Ovary (tissue), 10 donors: ENCODE measurements at regions of chr14 and their contacts with region 1.

Region 1: GRCh38 chr14:21039585-21040369 is 2.4 kb upstream of the RNASE7 start:
- DNase-seq: peak; percentile 59 to 70 (median 62)
- H3K4me3 ChIP-seq: no peak overlapping the region
- H3K27ac ChIP-seq: peak overlapping the region; percentile 27 to 55
- H3K4me1 ChIP-seq: peaks cover 13% of the 10 kb centered on the region
- H3K27me3 ChIP-seq: no peaks in the 10 kb centered on the region
- CTCF ChIP-seq: peak; percentile 38 to 83 (median 76)
- EP300 ChIP-seq: no peak
- POLR2A ChIP-seq: no peak

Region 2: GRCh38 chr14:20989572-20990551 is 49.9 kb before region 1 on chr14 and contains the start of gene METTL17:
- intact Hi-C with region 1: loop called in 1 of 4 experiments (anchors 10 kb)
- DNase-seq: peak; percentile 88 to 93 (median 90)
- H3K4me3 ChIP-seq: peak within 1 kb of the TSS; percentile 91
- H3K27ac ChIP-seq: peak within 1 kb of the TSS; percentile 23 to 67
- H3K4me1 ChIP-seq: peaks cover 8% of the 10 kb centered on the region
- H3K27me3 ChIP-seq: no peaks in the 10 kb centered on the region
- CTCF ChIP-seq: peak in 1 of 3 donors; percentile 25
- EP300 ChIP-seq: no peak
- POLR2A ChIP-seq: peak; percentile 54
- total RNA-seq, gene METTL17: 42.5 to 65.1 (median 45.7) TPM

Region 3: GRCh38 chr14:21014761-21015190 is 25.0 kb before region 1 on chr14:
- intact Hi-C with region 1: loop called in 3 of 4 experiments (anchors 1 to 2 kb)
- DNase-seq: peak; percentile 81 to 92 (median 87)
- H3K4me3 ChIP-seq: no peak overlapping the region
- H3K27ac ChIP-seq: peak overlapping the region in 1 of 2 donors; percentile 16
- H3K4me1 ChIP-seq: peaks cover 5% of the 10 kb centered on the region
- H3K27me3 ChIP-seq: no peaks in the 10 kb centered on the region
- CTCF ChIP-seq: peak; percentile 81 to 97 (median 96)
- EP300 ChIP-seq: no peak
- POLR2A ChIP-seq: no peak

Region 4: GRCh38 chr14:21024585-21025370 is 15.0 kb before region 1 on chr14 and contains the start of gene NDRG2:
- intact Hi-C with region 1: loop called in 1 of 4 experiments (anchors 2 kb)
- DNase-seq: peak; percentile 86 to 93 (median 88)
- H3K4me3 ChIP-seq: peak within 1 kb of the TSS; percentile 93
- H3K27ac ChIP-seq: peak within 1 kb of the TSS; percentile 90 to 97
- H3K4me1 ChIP-seq: peaks cover 9% of the 10 kb centered on the region
- H3K27me3 ChIP-seq: no peaks in the 10 kb centered on the region
- CTCF ChIP-seq: no peak
- EP300 ChIP-seq: no peak
- POLR2A ChIP-seq: no peak
- total RNA-seq, gene NDRG2: 355 to 703 (median 417) TPM

Region 5: GRCh38 chr14:21087294-21088091 is 47.7 kb after region 1 on chr14:
- intact Hi-C with region 1: no loop called
- DNase-seq: peak in 1 of 5 donors; percentile 24
- H3K4me3 ChIP-seq: no peak overlapping the region
- H3K27ac ChIP-seq: no peak overlapping the region
- H3K4me1 ChIP-seq: no peaks in the 10 kb centered on the region
- H3K27me3 ChIP-seq: no peaks in the 10 kb centered on the region
- CTCF ChIP-seq: no peak
- EP300 ChIP-seq: no peak
- POLR2A ChIP-seq: no peak